BJ (cell line): ENCODE measurements at regions of chr5 and their contacts with region 1.

Region 1: DNA sequence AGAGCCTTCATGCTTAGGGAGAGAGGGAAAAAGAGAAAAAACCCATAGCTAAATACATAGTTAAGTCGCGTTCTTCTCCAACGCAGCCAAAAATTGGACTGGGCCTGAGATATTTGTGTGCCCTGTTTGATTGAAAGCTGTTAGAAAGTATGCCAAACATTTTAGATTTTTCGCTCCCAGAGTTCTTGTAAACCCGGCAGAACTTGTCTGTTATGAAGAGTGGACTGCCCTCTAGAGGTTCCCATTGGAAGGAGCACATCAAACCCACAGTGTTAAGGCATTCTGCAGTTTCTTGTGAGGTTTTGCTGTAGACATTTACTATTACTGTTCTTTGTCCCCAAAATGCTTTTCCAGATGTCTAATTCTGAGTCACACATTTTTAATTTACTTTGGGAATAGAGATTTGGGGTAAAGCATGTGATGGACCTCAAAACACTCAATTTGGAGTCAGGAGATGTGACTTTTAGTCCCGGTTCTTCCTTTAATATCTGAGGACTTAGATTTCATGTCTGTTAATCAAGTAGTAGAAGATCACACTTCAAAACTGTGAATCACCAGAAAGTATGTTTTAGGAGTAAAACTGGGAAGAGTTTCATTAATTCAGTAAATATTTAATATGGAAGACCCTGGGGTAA is 96.6 kb downstream of the PCSK1 start:
- DNase-seq: peak; percentile 53
- H3K4me3 ChIP-seq: no peak overlapping the region
- H3K27me3 ChIP-seq: no peaks in the 10 kb centered on the region
- CTCF ChIP-seq: peak; percentile 91

Region 2: GRCh38 chr5:95892780-95893354 is 443.6 kb before region 1 on chr5:
- CTCF ChIA-PET with region 1: interaction called, 10 read pairs
- POLR2A ChIA-PET with region 1: no interaction called
- DNase-seq: no peak
- H3K4me3 ChIP-seq: no peak overlapping the region
- H3K27me3 ChIP-seq: no peaks in the 10 kb centered on the region
- CTCF ChIP-seq: peak; percentile 52

Region 3: GRCh38 chr5:96259151-96259772 is 77.2 kb before region 1 on chr5:
- CTCF ChIA-PET with region 1: interaction called, 10 read pairs
- POLR2A ChIA-PET with region 1: no interaction called
- DNase-seq: no peak
- H3K4me3 ChIP-seq: no peak overlapping the region
- H3K27me3 ChIP-seq: no peaks in the 10 kb centered on the region
- CTCF ChIP-seq: no peak

Region 4: DNA sequence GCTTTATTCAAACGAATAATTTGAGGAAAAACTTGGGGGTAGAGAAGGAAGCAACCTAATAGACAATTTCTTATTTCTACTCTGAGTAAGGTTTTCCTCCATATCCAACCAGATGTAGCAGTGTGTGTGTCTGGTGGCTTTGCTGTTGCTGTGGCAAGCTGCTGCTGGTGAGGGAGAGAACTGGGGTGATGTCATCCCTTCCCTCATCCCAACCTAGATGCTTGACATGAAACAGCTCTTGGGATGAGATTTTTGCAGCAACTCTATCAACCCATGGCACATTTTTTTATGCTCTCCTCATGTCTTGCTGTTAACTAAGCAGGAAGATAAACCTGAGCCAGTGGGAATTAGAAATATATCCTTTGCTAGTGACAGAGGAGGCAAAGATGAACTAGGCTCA is 39.2 kb before region 1 on chr5:
- CTCF ChIA-PET with region 1: interaction called, 16 read pairs
- POLR2A ChIA-PET with region 1: interaction called, 5 read pairs
- DNase-seq: peak; percentile 85
- H3K4me3 ChIP-seq: no peak overlapping the region
- H3K27me3 ChIP-seq: no peaks in the 10 kb centered on the region
- CTCF ChIP-seq: no peak

Region 5: GRCh38 chr5:96324708-96325107 is 11.8 kb before region 1 on chr5:
- CTCF ChIA-PET with region 1: interaction called, 18 read pairs
- POLR2A ChIA-PET with region 1: interaction called, 20 read pairs
- DNase-seq: no peak
- H3K4me3 ChIP-seq: no peak overlapping the region
- H3K27me3 ChIP-seq: no peaks in the 10 kb centered on the region
- CTCF ChIP-seq: no peak

Region 6: DNA sequence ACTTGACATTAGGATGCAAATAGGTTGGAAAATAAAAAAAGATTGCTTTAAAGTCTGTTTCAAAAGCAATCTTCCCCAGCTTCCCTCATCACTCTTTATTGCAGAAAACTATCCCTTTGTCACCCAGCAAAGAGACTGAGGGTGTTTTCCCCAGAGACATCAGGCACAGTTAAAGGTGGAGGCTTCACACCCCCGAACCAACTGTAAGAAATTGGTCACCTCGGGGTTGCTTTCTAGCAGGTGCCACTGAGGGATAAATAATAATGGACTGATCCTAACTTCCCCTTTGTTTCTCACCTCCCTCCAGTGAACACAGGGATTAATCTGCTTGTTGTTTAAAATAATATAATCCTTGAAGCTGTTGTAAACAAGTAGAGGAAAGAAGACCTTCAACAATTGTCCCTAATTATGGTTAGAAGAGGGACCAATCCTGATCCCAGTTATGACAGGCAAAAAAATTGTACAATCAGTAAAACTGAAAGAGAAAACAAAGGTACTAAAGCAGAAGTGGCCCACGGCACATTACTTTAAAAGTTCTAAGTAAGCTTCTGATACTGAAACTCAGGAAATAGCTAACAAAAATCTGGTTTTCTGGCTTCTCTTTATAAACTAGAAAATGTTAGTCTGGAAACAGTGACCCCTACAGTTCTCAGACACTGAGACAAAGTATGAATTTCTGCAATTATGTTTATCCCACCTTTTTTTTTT is 103.2 kb after region 1 on chr5:
- CTCF ChIA-PET with region 1: no interaction called
- POLR2A ChIA-PET with region 1: no interaction called
- DNase-seq: no peak
- H3K4me3 ChIP-seq: no peak overlapping the region
- H3K27me3 ChIP-seq: peaks cover 8% of the 10 kb centered on the region
- CTCF ChIP-seq: 0 out of 2 replicates have a peak, but pooled peaks have one; percentile 2